MCF 10A (cell line): ENCODE measurements at regions of chr12 and their contacts with region 1.

Region 1: GRCh38 chr12:16165506-16165905 is 112.0 kb downstream of the SLC15A5 start:
- DNase-seq: peak; percentile 70
- H3K4me3 Mint-ChIP-seq: no peak overlapping the region
- H3K27ac Mint-ChIP-seq: no peak overlapping the region
- H3K4me1 Mint-ChIP-seq: peaks cover 6% of the 10 kb centered on the region
- H3K27me3 Mint-ChIP-seq: no peaks in the 10 kb centered on the region
- CTCF ChIP-seq: peak; percentile 58

Region 2: GRCh38 chr12:16347391-16348298 is 182.1 kb after region 1 on chr12 and contains the start of gene MGST1:
- CTCF ChIA-PET with region 1: interaction called, 13 read pairs
- POLR2A ChIA-PET with region 1: interaction called, 8 read pairs
- intact Hi-C with region 1: loop called (anchors 5 kb)
- DNase-seq: peak; percentile 85
- H3K4me3 Mint-ChIP-seq: peak within 1 kb of the TSS; percentile 85
- H3K27ac Mint-ChIP-seq: peak within 1 kb of the TSS; percentile 94
- H3K4me1 Mint-ChIP-seq: peaks cover 31% of the 10 kb centered on the region
- H3K27me3 Mint-ChIP-seq: no peaks in the 10 kb centered on the region
- CTCF ChIP-seq: no peak
- total RNA-seq, gene MGST1: 375 and 415 TPM in 2 replicates

Region 3: DNA sequence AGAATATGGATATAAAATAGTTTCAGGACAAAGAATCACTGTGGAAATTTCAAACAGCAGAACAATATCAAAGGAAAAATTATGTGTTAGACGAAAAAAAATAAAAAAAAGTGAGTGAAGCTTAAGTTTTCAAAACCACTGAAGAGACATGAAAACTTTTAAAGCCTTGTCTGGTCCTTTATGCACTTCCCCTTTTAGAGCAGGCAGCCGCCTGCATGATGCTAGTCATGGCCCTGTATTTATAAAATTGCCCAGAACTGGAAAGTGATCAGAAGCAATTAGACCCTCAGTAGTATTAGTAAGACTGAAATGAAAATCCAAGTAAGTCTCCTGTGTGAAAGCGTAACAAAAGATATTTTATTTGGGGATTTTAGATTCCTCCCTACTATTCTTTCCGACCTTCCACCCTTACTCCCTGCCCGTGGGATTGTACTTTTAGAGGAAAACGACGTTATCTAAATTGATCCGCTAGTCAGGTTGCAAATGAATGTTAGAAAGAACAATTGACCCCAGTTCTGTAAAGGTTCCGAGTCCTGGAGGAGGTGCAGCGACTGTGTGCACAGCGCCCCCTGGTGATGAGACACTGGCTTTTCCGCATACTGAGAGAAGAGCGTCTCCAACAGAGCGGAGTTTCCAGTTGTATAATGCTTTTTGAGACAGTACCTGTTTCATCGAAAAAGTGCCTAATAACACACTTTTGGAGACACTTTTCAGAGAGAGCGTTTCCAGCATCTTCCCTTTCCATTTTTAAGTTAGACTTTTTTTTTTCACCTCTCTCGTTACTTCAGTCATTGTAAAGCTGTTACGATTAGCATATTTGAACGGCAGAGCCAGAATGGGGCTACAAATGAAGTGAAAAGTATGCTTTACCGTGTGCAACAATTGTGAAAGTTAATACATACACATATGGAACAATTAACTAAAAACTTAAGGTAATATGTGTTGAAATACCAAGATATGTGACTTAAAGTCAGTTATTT is 194.3 kb after region 1 on chr12:
- CTCF ChIA-PET with region 1: interaction called, 58 read pairs
- POLR2A ChIA-PET with region 1: interaction called, 4 read pairs
- intact Hi-C with region 1: loop called (anchors 1 kb)
- DNase-seq: peak; percentile 66
- H3K4me3 Mint-ChIP-seq: no peak overlapping the region
- H3K27ac Mint-ChIP-seq: peak overlapping the region; percentile 39
- H3K4me1 Mint-ChIP-seq: peaks cover 38% of the 10 kb centered on the region
- H3K27me3 Mint-ChIP-seq: no peaks in the 10 kb centered on the region
- CTCF ChIP-seq: peak; percentile 70

Region 4: GRCh38 chr12:16385782-16386646 is 220.5 kb after region 1 on chr12:
- CTCF ChIA-PET with region 1: interaction called, 18 read pairs
- POLR2A ChIA-PET with region 1: interaction called, 3 read pairs
- intact Hi-C with region 1: no loop called
- DNase-seq: peak; percentile 34
- H3K4me3 Mint-ChIP-seq: no peak overlapping the region
- H3K27ac Mint-ChIP-seq: no peak overlapping the region
- H3K4me1 Mint-ChIP-seq: peaks cover 7% of the 10 kb centered on the region
- H3K27me3 Mint-ChIP-seq: no peaks in the 10 kb centered on the region
- CTCF ChIP-seq: peak; percentile 53

Region 5: GRCh38 chr12:16606201-16606849 is 440.8 kb after region 1 on chr12:
- CTCF ChIA-PET with region 1: interaction called, 3 read pairs
- POLR2A ChIA-PET with region 1: no interaction called
- intact Hi-C with region 1: loop called (anchors 10 kb)
- DNase-seq: peak; percentile 35
- H3K4me3 Mint-ChIP-seq: peak overlapping the region; percentile 71
- H3K27ac Mint-ChIP-seq: no peak overlapping the region
- H3K4me1 Mint-ChIP-seq: peaks cover 13% of the 10 kb centered on the region
- H3K27me3 Mint-ChIP-seq: no peaks in the 10 kb centered on the region
- CTCF ChIP-seq: no peak

Region 6: GRCh38 chr12:16685107-16685506 is 519.6 kb after region 1 on chr12:
- CTCF ChIA-PET with region 1: interaction called, 3 read pairs
- POLR2A ChIA-PET with region 1: no interaction called
- intact Hi-C with region 1: loop called (anchors 1 kb)
- DNase-seq: peak; percentile 10
- H3K4me3 Mint-ChIP-seq: no peak overlapping the region
- H3K27ac Mint-ChIP-seq: no peak overlapping the region
- H3K4me1 Mint-ChIP-seq: no peaks in the 10 kb centered on the region
- H3K27me3 Mint-ChIP-seq: no peaks in the 10 kb centered on the region
- CTCF ChIP-seq: peak; percentile 39